ENCODE measurements at regions of chr1 and their contacts with region 1.

Region 1: GRCh38 chr1:53326088-53326597 is 1.7 kb downstream of the LRP8 start:
- DNase-seq: peak; percentile 92
- ATAC-seq: peak; percentile 88
- H3K4me3 Mint-ChIP-seq: peak overlapping the region; percentile 93
- H3K27ac Mint-ChIP-seq: peak overlapping the region; percentile 92
- H3K4me1 Mint-ChIP-seq: peaks cover 19% of the 10 kb centered on the region
- H3K27me3 Mint-ChIP-seq: no peaks in the 10 kb centered on the region
- CTCF ChIP-seq: no peak

Region 2: GRCh38 chr1:52365746-52366516 is 960.2 kb before region 1 on chr1 and contains the start of gene CC2D1B:
- CTCF ChIA-PET with region 1: no interaction called
- POLR2A ChIA-PET with region 1: no interaction called
- intact Hi-C with region 1: loop called (anchors 5 kb)
- DNase-seq: peak; percentile 100
- ATAC-seq: peak; percentile 95
- H3K4me3 Mint-ChIP-seq: peak within 1 kb of the TSS; percentile 94
- H3K27ac Mint-ChIP-seq: peak within 1 kb of the TSS; percentile 88
- H3K4me1 Mint-ChIP-seq: peaks cover 30% of the 10 kb centered on the region
- H3K27me3 Mint-ChIP-seq: peaks cover 2% of the 10 kb centered on the region
- CTCF ChIP-seq: no peak
- total RNA-seq, gene CC2D1B: 51.3 and 66.4 TPM in 2 replicates

Region 3: GRCh38 chr1:53196485-53197270 is 129.5 kb before region 1 on chr1 and contains the start of gene CPT2:
- CTCF ChIA-PET with region 1: no interaction called
- POLR2A ChIA-PET with region 1: interaction called, 7 read pairs
- intact Hi-C with region 1: loop called (anchors 1 kb)
- DNase-seq: peak; percentile 89
- ATAC-seq: peak; percentile 99
- H3K4me3 Mint-ChIP-seq: peak within 1 kb of the TSS; percentile 92
- H3K27ac Mint-ChIP-seq: peak within 1 kb of the TSS; percentile 94
- H3K4me1 Mint-ChIP-seq: peaks cover 25% of the 10 kb centered on the region
- H3K27me3 Mint-ChIP-seq: no peaks in the 10 kb centered on the region
- CTCF ChIP-seq: no peak
- total RNA-seq, gene CPT2: 12.5 and 15.7 TPM in 2 replicates

Region 4: GRCh38 chr1:53278201-53278725 is 47.9 kb before region 1 on chr1:
- CTCF ChIA-PET with region 1: interaction called, 5 read pairs
- POLR2A ChIA-PET with region 1: interaction called, 5 read pairs
- intact Hi-C with region 1: loop called (anchors 1 kb)
- DNase-seq: peak; percentile 64
- ATAC-seq: peak; percentile 87
- H3K4me3 Mint-ChIP-seq: no peak overlapping the region
- H3K27ac Mint-ChIP-seq: no peak overlapping the region
- H3K4me1 Mint-ChIP-seq: no peaks in the 10 kb centered on the region
- H3K27me3 Mint-ChIP-seq: no peaks in the 10 kb centered on the region
- CTCF ChIP-seq: peak; percentile 73

Region 5: GRCh38 chr1:53367503-53368304 is 41.6 kb after region 1 on chr1:
- CTCF ChIA-PET with region 1: interaction called, 5 read pairs
- POLR2A ChIA-PET with region 1: interaction called, 51 read pairs
- intact Hi-C with region 1: loop called (anchors 1 kb)
- DNase-seq: peak; percentile 24
- ATAC-seq: peak; percentile 91
- H3K4me3 Mint-ChIP-seq: peak overlapping the region; percentile 91
- H3K27ac Mint-ChIP-seq: peak overlapping the region; percentile 95
- H3K4me1 Mint-ChIP-seq: peaks cover 47% of the 10 kb centered on the region
- H3K27me3 Mint-ChIP-seq: no peaks in the 10 kb centered on the region
- CTCF ChIP-seq: no peak

Region 6: GRCh38 chr1:53725238-53725689 is 399.1 kb after region 1 on chr1:
- CTCF ChIA-PET with region 1: no interaction called
- POLR2A ChIA-PET with region 1: no interaction called
- intact Hi-C with region 1: no loop called
- DNase-seq: no peak
- ATAC-seq: no peak
- H3K4me3 Mint-ChIP-seq: no peak overlapping the region
- H3K27ac Mint-ChIP-seq: no peak overlapping the region
- H3K4me1 Mint-ChIP-seq: no peaks in the 10 kb centered on the region
- H3K27me3 Mint-ChIP-seq: peaks cover 8% of the 10 kb centered on the region
- CTCF ChIP-seq: no peak

Region 7: GRCh38 chr1:53945433-53946251 is 619.5 kb after region 1 on chr1 and contains the start of gene IFT25:
- CTCF ChIA-PET with region 1: no interaction called
- POLR2A ChIA-PET with region 1: interaction called, 4 read pairs
- intact Hi-C with region 1: loop called (anchors 5 kb)
- DNase-seq: peak; percentile 100
- ATAC-seq: peak; percentile 81
- H3K4me3 Mint-ChIP-seq: peak within 1 kb of the TSS; percentile 98
- H3K27ac Mint-ChIP-seq: peak within 1 kb of the TSS; percentile 92
- H3K4me1 Mint-ChIP-seq: peaks cover 37% of the 10 kb centered on the region
- H3K27me3 Mint-ChIP-seq: no peaks in the 10 kb centered on the region
- CTCF ChIP-seq: no peak
- total RNA-seq, gene IFT25: 38.0 and 41.0 TPM in 2 replicates

Measured in activated B cell treated with CpG ODN at 0.5 μM for 24 hours (primary cell).